Spleen (tissue), 13 donors: ENCODE measurements at regions of chr4 and their contacts with region 1.

Region 1: GRCh38 chr4:41268022-41268421 is 11.3 kb downstream of the UCHL1 start:
- DNase-seq: no peak
- H3K4me3 ChIP-seq: peak overlapping the region in 1 of 8 donors; percentile 2
- H3K27ac ChIP-seq: no peak overlapping the region
- H3K4me1 ChIP-seq: no peaks in the 10 kb centered on the region
- H3K27me3 ChIP-seq: peaks cover 0 to 3% (median 0%) of the 10 kb centered on the region in 7 donors
- CTCF ChIP-seq: no peak
- POLR2A ChIP-seq: no peak

Region 2: GRCh38 chr4:41873380-41874295 is 605.6 kb after region 1 on chr4:
- intact Hi-C with region 1: loop called (anchors 10 kb)
- DNase-seq: peak; percentile 57
- H3K4me3 ChIP-seq: peak overlapping the region in 2 of 8 donors; percentile 9 to 14
- H3K27ac ChIP-seq: no peak overlapping the region
- H3K4me1 ChIP-seq: peaks cover 0 to 12% (median 0%) of the 10 kb centered on the region in 6 donors
- H3K27me3 ChIP-seq: peaks cover 0 to 99% (median 70%) of the 10 kb centered on the region in 7 donors
- CTCF ChIP-seq: no peak
- POLR2A ChIP-seq: no peak